Activated T-helper 1 cell treated with anti-CD3 and anti-CD28 coated beads, Interleukin-12 subunit alpha, Interleukin-12 subunit beta, Interleukin-2, Interleukin-4 antibody, amounts not matched to agents 30 ng/mL and 10 ng/mL and 1 ng/mL, durations not matched to agents 14 hours and 24 hours and 36 hours (primary cell): ENCODE measurements at regions of chr5 and their contacts with region 1.

Region 1: GRCh38 chr5:141618804-141619554 is at the start of gene DIAPH1:
- DNase-seq: peak; percentile 96
- H3K4me3 Mint-ChIP-seq: peak within 1 kb of the TSS; percentile 98
- H3K27ac Mint-ChIP-seq: peak within 1 kb of the TSS; percentile 96
- H3K4me1 Mint-ChIP-seq: peaks cover 59% of the 10 kb centered on the region
- H3K27me3 Mint-ChIP-seq: no peaks in the 10 kb centered on the region
- total RNA-seq, gene DIAPH1: 221 and 234 TPM in 2 replicates

Region 2: GRCh38 chr5:140564196-140565023 is 1054.6 kb before region 1 on chr5 and contains the starts of genes APBB3 and SLC35A4:
- intact Hi-C with region 1: loop called (anchors 10 kb)
- DNase-seq: peak; percentile 98
- H3K4me3 Mint-ChIP-seq: peak within 1 kb of the TSS; percentile 95
- H3K27ac Mint-ChIP-seq: peak within 1 kb of the TSS; percentile 96
- H3K4me1 Mint-ChIP-seq: peaks cover 54% of the 10 kb centered on the region
- H3K27me3 Mint-ChIP-seq: no peaks in the 10 kb centered on the region
- total RNA-seq, gene APBB3: 17.2 and 21.2 TPM in 2 replicates
- total RNA-seq, gene SLC35A4: 94.3 and 107 TPM in 2 replicates

Region 3: DNA sequence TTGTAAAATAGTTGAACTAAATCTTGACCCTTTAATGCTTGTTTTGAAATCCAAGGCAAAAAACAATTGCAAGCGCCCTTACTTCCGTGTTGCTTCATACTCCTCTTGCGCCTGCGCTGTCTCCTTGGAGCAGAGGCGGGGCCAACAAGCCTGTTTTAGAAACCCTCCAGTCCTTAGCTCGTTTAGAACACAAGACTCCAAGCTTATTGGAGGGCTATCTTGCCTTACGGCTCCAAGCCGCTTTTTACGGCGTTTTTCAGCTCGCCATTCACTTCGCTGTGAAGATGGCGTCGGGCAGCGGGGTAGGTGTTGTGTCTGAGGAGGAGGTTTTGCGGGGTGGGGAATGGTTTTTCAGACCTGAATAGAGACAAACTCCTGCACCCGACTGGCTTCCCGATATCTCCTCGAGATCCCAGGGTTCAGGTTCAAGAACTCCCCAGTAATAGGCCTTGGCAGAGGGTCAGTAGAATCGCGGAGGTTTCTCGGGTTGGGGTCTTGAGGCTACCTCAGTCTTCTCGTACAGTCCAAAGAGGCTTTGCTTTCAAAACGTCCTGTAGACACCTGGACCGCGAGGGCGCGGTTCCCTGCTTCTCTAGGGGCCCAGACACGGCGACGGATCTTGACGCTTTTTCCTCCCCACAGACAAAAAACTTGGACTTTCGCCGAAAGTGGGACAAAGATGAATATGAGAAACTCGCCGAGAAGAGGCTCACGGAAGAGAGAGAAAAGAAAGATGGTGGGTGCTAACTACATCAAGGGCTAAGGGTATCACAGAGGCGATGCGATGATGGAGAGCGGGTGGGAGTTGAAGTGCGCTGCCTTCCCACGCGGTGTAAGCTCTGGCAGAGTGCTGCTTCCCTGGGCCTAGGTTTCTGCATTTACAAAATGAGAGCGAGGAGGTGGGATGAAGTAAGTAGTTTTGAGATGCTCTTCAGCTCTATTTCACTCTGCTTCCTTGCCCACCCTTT is 918.5 kb before region 1 on chr5 and contains the start of gene ZMAT2:
- intact Hi-C with region 1: loop called (anchors 5 kb)
- DNase-seq: peak; percentile 92
- H3K4me3 Mint-ChIP-seq: peak within 1 kb of the TSS; percentile 96
- H3K27ac Mint-ChIP-seq: peak within 1 kb of the TSS; percentile 88
- H3K4me1 Mint-ChIP-seq: peaks cover 22% of the 10 kb centered on the region
- H3K27me3 Mint-ChIP-seq: no peaks in the 10 kb centered on the region
- total RNA-seq, gene ZMAT2: 68.0 and 71.2 TPM in 2 replicates

Region 4: DNA sequence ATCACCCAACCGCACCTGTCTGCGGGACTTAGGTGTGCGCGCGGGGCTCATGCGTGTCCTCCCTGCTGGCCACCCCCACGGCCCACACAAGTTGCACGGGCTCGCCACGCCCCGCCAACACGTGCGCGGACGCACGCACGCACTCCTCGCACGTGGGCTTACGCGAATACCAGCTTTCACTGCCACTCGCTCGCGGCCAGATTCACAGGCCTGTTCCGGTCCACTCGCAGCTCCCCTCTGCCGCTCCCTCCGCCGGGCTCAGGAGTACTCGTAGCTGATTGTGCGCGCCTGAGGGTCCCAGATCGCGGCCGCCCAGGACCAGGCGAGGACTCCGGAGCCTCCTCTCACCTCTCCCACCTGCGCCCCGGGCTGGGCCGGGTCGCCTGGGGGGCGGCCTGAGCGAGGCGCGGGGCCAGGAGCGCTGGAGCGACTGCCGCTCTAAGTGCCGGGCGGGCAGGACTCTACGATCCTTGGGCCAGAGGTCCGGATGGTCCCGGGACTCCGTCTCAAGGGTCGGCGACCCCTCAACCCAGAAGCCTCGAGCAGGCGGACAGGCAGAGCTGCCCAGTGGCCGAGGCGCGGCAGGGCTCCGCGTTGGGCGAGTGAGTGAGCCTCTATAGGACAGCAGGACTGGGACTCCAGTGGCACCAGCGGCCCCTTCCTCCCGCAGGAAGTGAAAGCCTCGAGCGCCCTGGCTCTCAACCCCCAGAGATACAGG is 126.7 kb before region 1 on chr5:
- intact Hi-C with region 1: no loop called
- DNase-seq: no peak
- H3K4me3 Mint-ChIP-seq: peak overlapping the region; percentile 64
- H3K27ac Mint-ChIP-seq: no peak overlapping the region
- H3K4me1 Mint-ChIP-seq: no peaks in the 10 kb centered on the region
- H3K27me3 Mint-ChIP-seq: peaks cover 37% of the 10 kb centered on the region

Region 5: GRCh38 chr5:141564216-141564692 is 54.7 kb before region 1 on chr5:
- intact Hi-C with region 1: loop called (anchors 1 kb)
- DNase-seq: peak; percentile 65
- H3K4me3 Mint-ChIP-seq: peak overlapping the region; percentile 6
- H3K27ac Mint-ChIP-seq: peak overlapping the region; percentile 88
- H3K4me1 Mint-ChIP-seq: peaks cover 31% of the 10 kb centered on the region
- H3K27me3 Mint-ChIP-seq: no peaks in the 10 kb centered on the region

Region 6: GRCh38 chr5:141597394-141597793 is 21.6 kb before region 1 on chr5:
- intact Hi-C with region 1: loop called (anchors 1 kb)
- DNase-seq: no peak
- H3K4me3 Mint-ChIP-seq: no peak overlapping the region
- H3K27ac Mint-ChIP-seq: peak overlapping the region; percentile 5
- H3K4me1 Mint-ChIP-seq: peaks cover 66% of the 10 kb centered on the region
- H3K27me3 Mint-ChIP-seq: no peaks in the 10 kb centered on the region

Region 7: DNA sequence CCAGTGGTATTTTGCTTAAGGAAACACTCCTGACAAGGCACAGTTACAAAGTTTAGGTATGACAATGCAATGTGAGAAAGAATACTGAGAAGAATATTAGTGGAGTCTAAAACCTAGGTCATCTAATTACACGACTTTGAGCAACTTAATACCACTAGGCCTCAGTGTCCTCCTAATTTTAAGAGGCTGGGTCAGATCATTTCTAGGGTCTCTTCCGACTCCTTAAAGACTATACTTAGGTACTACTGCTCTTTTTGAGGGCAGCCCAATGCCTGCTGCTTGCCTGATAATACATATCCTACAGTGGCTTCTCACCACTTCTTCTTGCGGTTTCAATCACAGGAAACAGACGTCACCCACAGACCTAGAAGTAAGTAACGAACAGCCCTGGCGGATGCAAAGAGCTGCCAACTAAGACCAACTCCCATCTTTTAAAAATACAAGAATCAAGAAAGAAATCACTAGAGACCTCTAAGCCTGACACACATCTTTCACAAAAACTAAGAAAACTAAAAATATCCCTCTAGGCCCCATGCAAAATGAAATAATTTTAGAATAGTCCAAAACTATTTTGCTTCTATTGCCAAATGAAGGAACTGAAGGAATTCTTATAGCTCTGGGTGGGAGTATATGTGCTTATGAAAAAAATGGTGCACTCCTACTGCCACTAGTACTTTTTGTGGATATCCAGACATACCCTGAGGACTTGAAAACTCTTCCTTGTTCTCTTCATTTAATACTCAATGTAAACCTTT is 13.3 kb before region 1 on chr5:
- intact Hi-C with region 1: loop called (anchors 1 kb)
- DNase-seq: peak; percentile 76
- H3K4me3 Mint-ChIP-seq: peak overlapping the region; percentile 45
- H3K27ac Mint-ChIP-seq: peak overlapping the region; percentile 85
- H3K4me1 Mint-ChIP-seq: peaks cover 78% of the 10 kb centered on the region
- H3K27me3 Mint-ChIP-seq: no peaks in the 10 kb centered on the region

Region 8: GRCh38 chr5:141636413-141637122 is 17.6 kb after region 1 on chr5 and contains the starts of genes HDAC3 and RELL2:
- intact Hi-C with region 1: loop called (anchors 1 kb)
- DNase-seq: peak; percentile 92
- H3K4me3 Mint-ChIP-seq: peak within 1 kb of the TSS; percentile 93
- H3K27ac Mint-ChIP-seq: peak within 1 kb of the TSS; percentile 80
- H3K4me1 Mint-ChIP-seq: peaks cover 53% of the 10 kb centered on the region
- H3K27me3 Mint-ChIP-seq: no peaks in the 10 kb centered on the region
- total RNA-seq, gene HDAC3: 83.1 and 87.2 TPM in 2 replicates
- total RNA-seq, gene RELL2: 19.3 and 19.5 TPM in 2 replicates